Calu3 (cell line): ENCODE measurements at regions of chr19 and their contacts with region 1.

Region 1: GRCh38 chr19:1157931-1158884 is 15.9 kb downstream of the SBNO2 start:
- DNase-seq: no peak
- H3K4me3 Mint-ChIP-seq: no peak overlapping the region
- H3K27ac Mint-ChIP-seq: no peak overlapping the region
- H3K4me1 Mint-ChIP-seq: peaks cover 13% of the 10 kb centered on the region
- H3K27me3 Mint-ChIP-seq: no peaks in the 10 kb centered on the region
- CTCF ChIP-seq: no peak

Region 2: DNA sequence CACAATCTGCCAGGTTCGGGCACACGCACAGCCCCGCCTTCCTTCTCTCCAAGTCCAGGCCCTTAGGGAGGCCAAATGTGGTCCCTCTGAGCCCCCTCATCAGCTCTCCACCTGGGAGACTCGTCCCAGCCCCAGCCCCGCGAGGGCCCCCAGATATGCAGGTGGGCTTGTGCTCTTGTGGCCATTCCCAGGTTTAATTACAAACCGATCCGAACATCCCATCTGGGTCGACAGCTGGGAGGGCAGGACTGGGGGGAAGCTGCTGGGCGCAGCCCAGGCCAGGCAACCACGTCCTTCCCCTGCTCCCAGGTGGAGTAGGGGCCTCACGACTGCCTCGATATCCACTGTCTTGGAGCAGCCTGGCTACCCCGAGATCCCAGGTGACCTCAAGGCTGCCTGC is 741.8 kb before region 1 on chr19:
- CTCF ChIA-PET with region 1: interaction called, 10 read pairs
- intact Hi-C with region 1: no loop called
- DNase-seq: no peak
- H3K4me3 Mint-ChIP-seq: no peak overlapping the region
- H3K27ac Mint-ChIP-seq: no peak overlapping the region
- H3K4me1 Mint-ChIP-seq: no peaks in the 10 kb centered on the region
- H3K27me3 Mint-ChIP-seq: no peaks in the 10 kb centered on the region
- CTCF ChIP-seq: no peak

Region 3: GRCh38 chr19:940591-941291 is 217.5 kb before region 1 on chr19:
- CTCF ChIA-PET with region 1: no interaction called
- intact Hi-C with region 1: no loop called
- DNase-seq: peak; percentile 86
- H3K4me3 Mint-ChIP-seq: no peak overlapping the region
- H3K27ac Mint-ChIP-seq: peak overlapping the region; percentile 21
- H3K4me1 Mint-ChIP-seq: peaks cover 26% of the 10 kb centered on the region
- H3K27me3 Mint-ChIP-seq: peaks cover 33% of the 10 kb centered on the region
- CTCF ChIP-seq: no peak